SK-N-SH (cell line): ENCODE measurements at regions of chr2 and their contacts with region 1.

Region 1: GRCh38 chr2:218301176-218301819 is 9.0 kb upstream of the TMBIM1 start:
- DNase-seq: peak; percentile 74
- H3K4me3 ChIP-seq: peak overlapping the region in 1 of 2 experiments; percentile 27; a peak in 1 of 4 replicates
- H3K27ac ChIP-seq: no peak overlapping the region
- H3K4me1 ChIP-seq: no peaks in the 10 kb centered on the region
- H3K27me3 ChIP-seq: no peaks in the 10 kb centered on the region
- CTCF ChIP-seq: peak; percentile 94
- EP300 ChIP-seq: no peak
- RAD21 ChIP-seq: peak; percentile 95

Region 2: GRCh38 chr2:217953531-217953932 is 347.8 kb before region 1 on chr2:
- CTCF ChIA-PET with region 1: no interaction called
- POLR2A ChIA-PET with region 1: no interaction called
- DNase-seq: no peak
- H3K4me3 ChIP-seq: no peak overlapping the region
- H3K27ac ChIP-seq: no peak overlapping the region; a peak in 1 of 4 replicates
- H3K4me1 ChIP-seq: peaks cover 3 to 56% of the 10 kb centered on the region in 2 experiments; a peak in 3 of 4 replicates
- H3K27me3 ChIP-seq: no peaks in the 10 kb centered on the region
- CTCF ChIP-seq: no peak
- EP300 ChIP-seq: no peak
- RAD21 ChIP-seq: no peak

Region 3: GRCh38 chr2:218286570-218287459 is 14.5 kb before region 1 on chr2:
- CTCF ChIA-PET with region 1: interaction called, 11 read pairs
- POLR2A ChIA-PET with region 1: no interaction called
- DNase-seq: peak; percentile 73
- H3K4me3 ChIP-seq: peak overlapping the region; percentile 48 to 64
- H3K27ac ChIP-seq: peak overlapping the region; percentile 88 to 99
- H3K4me1 ChIP-seq: peaks cover 12 to 33% of the 10 kb centered on the region in 2 experiments; a peak in 3 of 4 replicates
- H3K27me3 ChIP-seq: no peaks in the 10 kb centered on the region
- CTCF ChIP-seq: no peak
- EP300 ChIP-seq: no peak
- RAD21 ChIP-seq: no peak

Region 4: DNA sequence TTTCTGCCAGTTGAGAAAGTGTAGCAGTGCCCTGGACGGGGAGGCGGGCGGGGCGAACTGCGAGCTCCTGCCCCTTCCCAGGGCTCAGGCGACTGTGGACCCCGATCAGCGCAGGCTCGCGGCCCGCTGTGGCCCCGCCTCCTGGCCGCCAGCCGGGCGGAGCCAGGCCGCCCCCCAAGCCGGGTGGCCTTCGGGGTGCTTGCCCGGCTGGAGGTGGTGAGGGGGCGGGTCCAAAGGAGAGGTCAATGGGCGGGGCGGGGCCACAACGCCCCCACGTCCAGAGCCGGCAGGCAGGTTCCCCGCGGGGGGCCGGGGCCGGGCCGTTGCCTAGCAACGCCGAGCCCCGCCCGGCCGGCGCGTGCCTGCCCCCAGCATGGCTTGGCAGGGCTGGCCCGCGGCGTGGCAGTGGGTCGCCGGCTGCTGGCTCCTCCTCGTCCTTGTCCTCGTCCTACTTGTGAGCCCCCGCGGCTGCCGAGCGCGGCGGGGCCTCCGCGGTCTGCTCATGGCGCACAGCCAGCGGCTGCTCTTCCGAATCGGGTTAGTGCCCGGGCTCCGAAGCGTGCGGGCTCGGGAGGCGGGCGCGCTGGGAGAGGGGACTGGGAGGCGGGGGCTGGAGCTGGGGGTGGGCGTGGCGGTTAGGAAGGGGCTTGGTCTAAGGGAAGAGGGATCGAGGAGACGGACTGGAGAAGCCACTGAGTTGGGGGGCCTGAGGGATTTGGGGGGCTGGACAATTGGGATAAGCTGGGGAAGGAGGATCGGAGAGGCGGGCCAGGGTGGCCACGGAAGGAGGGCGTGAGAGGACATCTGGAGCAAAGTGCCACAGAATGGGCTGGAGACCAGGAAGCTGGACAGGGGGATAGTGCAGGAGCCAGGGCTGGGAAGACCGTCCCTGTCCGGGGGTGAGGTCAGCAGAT is 21.9 kb after region 1 on chr2:
- CTCF ChIA-PET with region 1: interaction called, 14 read pairs
- POLR2A ChIA-PET with region 1: no interaction called
- DNase-seq: peak; percentile 97
- H3K4me3 ChIP-seq: peak overlapping the region; percentile 65 to 71
- H3K27ac ChIP-seq: peak overlapping the region; percentile 29 to 72; a peak in 3 of 4 replicates
- H3K4me1 ChIP-seq: peaks cover 7 to 19% of the 10 kb centered on the region in 2 experiments; a peak in 2 of 4 replicates
- H3K27me3 ChIP-seq: no peaks in the 10 kb centered on the region
- CTCF ChIP-seq: no peak
- EP300 ChIP-seq: no peak
- RAD21 ChIP-seq: no peak

Region 5: DNA sequence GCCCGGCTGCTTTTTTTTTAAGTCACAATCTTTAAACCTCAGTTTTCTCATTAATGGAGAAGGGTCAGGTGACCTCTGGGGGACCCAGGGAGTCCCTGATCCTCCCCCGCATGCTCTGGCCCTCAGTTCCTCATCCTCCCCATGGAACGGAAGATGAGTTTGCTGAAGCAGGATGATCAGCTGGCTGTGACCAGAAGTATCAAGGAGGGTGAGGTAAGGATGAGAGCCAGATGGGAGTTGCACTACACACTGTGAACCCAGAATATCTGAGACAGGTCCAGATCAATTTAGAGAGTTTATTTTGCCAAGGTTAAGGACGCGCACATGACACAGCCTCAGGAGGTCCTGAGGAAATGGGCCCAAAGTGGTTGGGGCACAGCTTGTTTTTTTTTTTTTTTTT is 59.1 kb after region 1 on chr2:
- CTCF ChIA-PET with region 1: interaction called, 52 read pairs
- POLR2A ChIA-PET with region 1: no interaction called
- DNase-seq: no peak
- H3K4me3 ChIP-seq: no peak overlapping the region
- H3K27ac ChIP-seq: no peak overlapping the region
- H3K4me1 ChIP-seq: peaks cover 0 to 4% of the 10 kb centered on the region in 2 experiments; a peak in 1 of 4 replicates
- H3K27me3 ChIP-seq: no peaks in the 10 kb centered on the region
- CTCF ChIP-seq: no peak
- EP300 ChIP-seq: no peak
- RAD21 ChIP-seq: no peak